Posterior cingulate gyrus (tissue), 11 donors: ENCODE measurements at regions of chr16 and their contacts with region 1.

Region 1: GRCh38 chr16:67372664-67373063 is 20.6 kb downstream of the TPPP3 start:
- DNase-seq: no peak

Region 2: DNA sequence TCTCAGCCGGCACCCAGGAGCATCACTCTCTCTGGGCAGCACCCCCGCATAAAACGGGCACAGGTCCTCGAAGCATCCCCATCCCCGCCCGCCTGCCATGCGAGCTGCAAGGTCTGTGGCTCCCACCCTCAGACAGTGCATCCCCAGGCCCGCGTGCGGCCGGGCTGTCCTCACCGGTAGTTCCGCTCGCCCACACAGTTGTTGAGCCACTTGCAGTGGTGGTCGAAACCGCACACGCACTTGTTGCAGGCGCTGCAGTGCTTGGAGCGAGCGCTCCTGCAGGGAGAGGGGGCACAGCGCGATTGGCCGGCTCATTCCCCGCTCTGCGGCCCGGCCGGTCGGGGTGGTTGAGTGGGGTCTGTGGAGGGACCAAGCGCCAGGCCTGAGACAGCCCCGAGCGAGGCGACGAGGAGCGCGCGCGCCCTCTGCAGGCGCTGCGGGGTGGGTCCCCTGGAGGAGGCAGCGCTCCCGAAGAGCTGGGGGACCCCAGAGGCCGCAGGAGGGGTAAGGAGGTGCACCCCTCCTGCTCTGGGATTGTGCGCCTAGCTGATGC is 26.6 kb after region 1 on chr16:
- intact Hi-C with region 1: loop called (anchors 2 kb)
- DNase-seq: peak in 6 of 10 donors; percentile 50 to 93 (median 66)

Region 3: DNA sequence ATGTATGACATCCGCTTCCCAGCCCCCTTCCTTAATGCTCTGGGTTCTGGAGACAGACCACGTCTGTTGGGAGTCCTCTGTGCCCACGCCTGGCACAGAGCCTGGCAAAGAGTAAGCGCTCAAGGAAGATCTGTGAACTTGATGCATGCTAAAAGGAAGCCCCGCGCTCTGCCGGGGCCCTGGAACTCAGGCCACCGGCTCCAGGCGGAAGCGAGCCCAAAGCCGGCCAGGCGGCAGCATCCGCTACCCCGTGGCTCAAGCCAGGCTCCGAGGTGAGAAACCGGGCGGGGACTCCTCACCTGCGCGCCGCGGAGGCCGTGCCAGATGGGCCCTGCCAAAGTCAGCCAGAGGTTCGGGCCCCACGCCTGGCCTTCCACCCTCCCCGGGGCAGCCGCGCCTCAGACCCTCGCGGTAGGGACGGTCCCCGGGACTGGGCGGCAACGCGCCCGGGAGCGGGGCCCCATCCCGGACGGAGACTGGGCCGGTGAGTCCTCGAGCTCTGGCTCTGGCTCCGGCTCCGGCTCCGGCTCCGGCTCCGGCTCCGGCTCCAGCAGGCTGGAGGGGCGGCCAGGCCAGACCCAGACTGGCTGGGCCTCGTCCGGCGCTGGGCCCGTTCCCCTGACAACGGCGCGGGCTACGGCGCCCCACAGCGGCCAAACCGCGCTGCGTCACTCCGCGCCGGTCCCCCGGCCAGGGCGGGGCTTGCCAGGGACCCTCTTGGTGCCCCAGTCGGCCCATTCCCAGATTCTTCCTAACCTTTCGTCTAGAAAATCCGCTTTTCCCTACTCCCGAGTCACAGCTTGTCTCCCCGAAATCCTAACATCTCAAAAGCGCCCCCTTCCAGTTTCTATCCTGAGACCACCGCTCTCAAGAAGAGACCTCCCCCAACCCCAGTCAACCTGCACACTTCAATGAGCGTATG is 43.5 kb after region 1 on chr16 and contains the start of gene ZDHHC1:
- intact Hi-C with region 1: loop called (anchors 5 kb)
- DNase-seq: peak; percentile 67 to 96 (median 76)

Region 4: GRCh38 chr16:67595033-67595355 is 222.3 kb after region 1 on chr16:
- intact Hi-C with region 1: no loop called
- DNase-seq: peak in 1 of 10 donors; percentile 20